Sigmoid colon (tissue), 7 donors: ENCODE measurements at regions of chr5 and their contacts with region 1.

Region 1: GRCh38 chr5:142356716-142357473 is 32.1 kb upstream of the SPRY4 start:
- DNase-seq: peak; percentile 93
- H3K4me3 ChIP-seq: peak overlapping the region; percentile 46 to 68 (median 58)
- H3K27ac ChIP-seq: peak overlapping the region; percentile 72 to 97 (median 82)
- H3K4me1 ChIP-seq: peaks cover 0 to 20% (median 11%) of the 10 kb centered on the region in 4 donors
- H3K27me3 ChIP-seq: no peaks in the 10 kb centered on the region
- CTCF ChIP-seq: no peak
- EP300 ChIP-seq: no peak
- POLR2A ChIP-seq: no peak

Region 2: GRCh38 chr5:142324871-142325724 is 31.8 kb before region 1 on chr5 and contains the start of gene SPRY4:
- intact Hi-C with region 1: loop called (anchors 2 kb)
- DNase-seq: peak; percentile 97
- H3K4me3 ChIP-seq: peak within 1 kb of the TSS; percentile 47 to 65 (median 54)
- H3K27ac ChIP-seq: peak within 1 kb of the TSS; percentile 69 to 96 (median 82)
- H3K4me1 ChIP-seq: peaks cover 0 to 29% (median 25%) of the 10 kb centered on the region in 4 donors
- H3K27me3 ChIP-seq: peaks cover 10 to 40% (median 22%) of the 10 kb centered on the region in 3 donors
- CTCF ChIP-seq: no peak
- EP300 ChIP-seq: no peak
- POLR2A ChIP-seq: peak in 1 of 2 donors; percentile 67
- total RNA-seq, gene SPRY4: 8.6 to 15.7 (median 12.4) TPM